Activated naive CD4-positive, alpha-beta T cell treated with anti-CD3 and anti-CD28 coated beads for 36 hours (primary cell): ENCODE measurements at regions of chr12 and their contacts with region 1.

Region 1: DNA sequence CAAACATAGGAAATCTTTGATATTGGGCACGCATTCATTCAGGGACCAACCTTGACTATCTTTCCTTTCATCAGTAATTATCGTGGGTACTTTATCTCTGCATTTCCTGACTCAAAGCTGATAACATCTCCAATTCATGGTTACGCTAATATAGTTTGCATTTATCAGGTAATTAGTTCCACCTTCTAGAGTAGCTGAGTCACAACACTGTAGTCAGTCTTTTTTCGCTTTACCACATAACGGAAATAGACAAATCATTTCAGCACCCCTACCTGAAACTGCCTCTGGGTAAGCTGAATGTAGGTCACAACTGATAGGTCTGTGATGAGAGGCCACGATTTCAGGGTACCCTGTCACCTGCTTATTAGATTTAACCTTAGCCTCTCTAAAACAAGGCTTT is 36.7 kb upstream of the IL22 start:
- DNase-seq: peak; percentile 65
- H3K4me3 Mint-ChIP-seq: no peak overlapping the region
- H3K27ac Mint-ChIP-seq: no peak overlapping the region
- H3K4me1 Mint-ChIP-seq: peaks cover 41% of the 10 kb centered on the region
- H3K27me3 Mint-ChIP-seq: peaks cover 12% of the 10 kb centered on the region

Region 2: GRCh38 chr12:68119724-68120211 is 170.4 kb before region 1 on chr12:
- CTCF ChIA-PET with region 1: no interaction called
- intact Hi-C with region 1: loop called (anchors 1 kb)
- DNase-seq: peak; percentile 83
- H3K4me3 Mint-ChIP-seq: no peak overlapping the region
- H3K27ac Mint-ChIP-seq: peak overlapping the region; percentile 43
- H3K4me1 Mint-ChIP-seq: peaks cover 33% of the 10 kb centered on the region
- H3K27me3 Mint-ChIP-seq: no peaks in the 10 kb centered on the region

Region 3: DNA sequence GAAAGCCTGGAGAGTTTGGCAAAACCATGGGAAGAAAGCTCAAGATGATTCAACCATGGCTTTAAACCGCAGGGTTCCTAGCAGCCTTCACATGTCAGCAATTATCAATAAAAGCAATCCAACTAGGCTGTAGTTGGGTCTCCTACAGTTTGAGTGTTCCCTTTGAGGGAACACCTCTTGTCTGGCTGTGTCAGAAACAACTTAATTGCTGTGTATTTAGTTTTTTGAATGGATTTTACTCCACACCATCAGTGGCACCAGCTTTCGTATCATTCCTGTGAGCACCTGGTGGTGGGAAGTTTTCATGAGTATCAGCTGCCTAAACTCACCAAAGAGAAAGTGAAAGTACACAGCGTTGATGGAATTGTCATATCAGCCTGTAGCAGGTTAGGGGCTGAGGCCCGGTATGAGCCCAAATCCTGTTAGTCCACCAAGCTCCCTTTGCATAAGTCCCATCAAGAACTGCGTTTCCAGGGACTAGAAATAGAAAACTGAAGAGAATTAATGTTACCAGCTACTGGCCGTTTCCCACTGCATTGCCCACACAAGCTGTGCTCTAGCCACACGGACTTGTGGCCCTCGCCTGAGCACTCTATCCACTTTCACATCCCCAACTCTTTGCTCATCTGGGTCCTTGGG is 53.6 kb before region 1 on chr12:
- CTCF ChIA-PET with region 1: interaction called, 3 read pairs
- intact Hi-C with region 1: loop called (anchors 1 kb)
- DNase-seq: peak; percentile 43
- H3K4me3 Mint-ChIP-seq: peak overlapping the region; percentile 75
- H3K27ac Mint-ChIP-seq: peak overlapping the region; percentile 57
- H3K4me1 Mint-ChIP-seq: peaks cover 48% of the 10 kb centered on the region
- H3K27me3 Mint-ChIP-seq: no peaks in the 10 kb centered on the region

Region 4: DNA sequence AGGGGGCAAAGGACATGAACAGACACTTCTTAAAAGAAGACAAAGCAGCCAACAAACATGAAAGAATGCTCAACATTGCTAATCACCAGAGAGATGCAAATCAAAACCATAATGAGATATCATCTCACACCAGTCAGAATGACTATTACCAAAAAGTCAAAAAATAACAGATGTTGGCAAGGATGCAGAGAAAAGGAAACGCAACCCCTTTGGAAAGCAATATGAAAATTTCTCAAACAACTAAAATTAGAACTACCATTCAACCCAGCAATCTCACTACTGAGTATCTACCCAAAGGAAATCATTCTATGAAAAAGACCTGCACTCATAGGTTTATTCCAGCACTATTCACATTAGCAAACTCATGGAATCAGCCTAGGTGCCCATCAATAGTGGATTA is 16.4 kb after region 1 on chr12:
- CTCF ChIA-PET with region 1: no interaction called
- intact Hi-C with region 1: loop called (anchors 1 kb)
- DNase-seq: no peak
- H3K4me3 Mint-ChIP-seq: no peak overlapping the region
- H3K27ac Mint-ChIP-seq: no peak overlapping the region
- H3K4me1 Mint-ChIP-seq: peaks cover 8% of the 10 kb centered on the region
- H3K27me3 Mint-ChIP-seq: no peaks in the 10 kb centered on the region

Region 5: DNA sequence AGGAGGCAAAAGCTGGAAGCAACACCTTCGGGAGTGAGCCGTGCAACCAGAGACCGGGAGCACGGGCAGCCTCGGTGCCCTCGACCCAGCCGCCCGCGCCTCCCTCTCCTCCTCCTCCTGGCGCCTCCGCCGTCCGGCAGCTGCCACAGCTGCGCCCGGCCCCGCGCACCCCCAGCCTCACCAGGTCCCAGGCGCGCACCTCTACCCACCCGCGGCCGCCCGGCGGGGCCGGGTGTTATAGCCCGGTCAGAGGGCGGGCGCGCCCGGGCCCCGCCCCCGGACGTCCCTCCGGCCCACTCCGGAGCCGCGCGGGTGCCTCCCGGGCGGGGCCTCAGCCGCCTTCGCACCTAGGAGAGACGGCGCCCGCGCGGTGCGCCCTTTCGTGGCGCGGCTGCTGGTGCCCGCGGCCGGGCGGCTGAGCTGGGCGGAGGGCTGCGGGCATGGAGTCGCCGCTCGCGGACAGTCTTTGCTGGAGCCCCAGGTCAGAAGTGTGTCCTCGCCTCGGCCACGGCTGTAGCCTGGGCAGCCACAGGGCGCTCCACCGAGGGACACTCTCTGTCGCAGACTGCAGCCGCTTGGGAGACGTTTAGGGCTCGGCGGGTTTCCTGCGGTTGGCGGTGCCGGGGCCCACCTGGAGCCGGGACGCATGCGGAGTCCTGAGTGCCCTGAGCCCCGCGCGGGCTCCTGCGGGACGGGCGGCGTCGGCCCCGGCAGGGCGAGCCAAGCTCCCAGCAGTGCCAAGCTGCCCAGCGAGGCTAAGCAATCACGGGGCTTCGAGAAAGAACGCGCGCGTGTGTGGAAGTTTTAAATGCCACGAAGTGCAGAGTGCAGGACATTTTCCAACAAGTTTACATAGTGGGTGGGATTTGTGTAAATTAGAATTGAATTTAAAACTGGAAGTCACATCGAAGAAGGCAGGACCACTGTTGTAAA is 643.1 kb after region 1 on chr12 and contains the start of gene CPM:
- CTCF ChIA-PET with region 1: no interaction called
- intact Hi-C with region 1: loop called (anchors 5 kb)
- DNase-seq: peak; percentile 76
- H3K4me3 Mint-ChIP-seq: peak within 1 kb of the TSS; percentile 82
- H3K27ac Mint-ChIP-seq: peak within 1 kb of the TSS; percentile 58
- H3K4me1 Mint-ChIP-seq: peaks cover 21% of the 10 kb centered on the region
- H3K27me3 Mint-ChIP-seq: peaks cover 22% of the 10 kb centered on the region
- total RNA-seq, gene CPM: 50.5 to 55.1 TPM